Activated T-helper 1 cell treated with anti-CD3 and anti-CD28 coated beads, Interleukin-12 subunit alpha, Interleukin-12 subunit beta, Interleukin-2, Interleukin-4 antibody, amounts not matched to agents 30 ng/mL and 10 ng/mL and 1 ng/mL, durations not matched to agents 14 hours and 24 hours and 36 hours (primary cell): ENCODE measurements at regions of chr2 and their contacts with region 1.

Region 1: DNA sequence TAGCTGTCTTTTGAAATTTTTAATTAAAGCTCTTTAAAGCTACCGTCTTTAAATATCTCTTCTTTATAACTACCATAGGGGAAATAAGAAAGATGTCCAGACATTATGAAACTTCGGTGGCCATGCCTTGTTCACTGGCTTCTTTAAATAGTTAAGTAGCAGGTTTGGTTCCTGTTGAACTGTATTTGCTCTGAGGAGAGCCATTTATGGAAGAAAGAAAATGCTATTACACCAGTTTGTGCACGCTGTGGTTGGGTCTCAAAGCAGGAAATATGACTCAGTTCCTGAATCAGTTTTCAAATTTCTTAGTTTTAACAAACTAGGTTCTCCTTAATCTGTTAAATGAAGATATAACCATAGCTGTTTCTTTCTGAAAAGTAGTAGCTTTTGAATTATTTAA is 12.2 kb downstream of the ARPC2 start:
- DNase-seq: peak; percentile 57
- H3K4me3 Mint-ChIP-seq: peak overlapping the region; percentile 65
- H3K27ac Mint-ChIP-seq: peak overlapping the region; percentile 87
- H3K4me1 Mint-ChIP-seq: peaks cover 66% of the 10 kb centered on the region
- H3K27me3 Mint-ChIP-seq: no peaks in the 10 kb centered on the region

Region 2: DNA sequence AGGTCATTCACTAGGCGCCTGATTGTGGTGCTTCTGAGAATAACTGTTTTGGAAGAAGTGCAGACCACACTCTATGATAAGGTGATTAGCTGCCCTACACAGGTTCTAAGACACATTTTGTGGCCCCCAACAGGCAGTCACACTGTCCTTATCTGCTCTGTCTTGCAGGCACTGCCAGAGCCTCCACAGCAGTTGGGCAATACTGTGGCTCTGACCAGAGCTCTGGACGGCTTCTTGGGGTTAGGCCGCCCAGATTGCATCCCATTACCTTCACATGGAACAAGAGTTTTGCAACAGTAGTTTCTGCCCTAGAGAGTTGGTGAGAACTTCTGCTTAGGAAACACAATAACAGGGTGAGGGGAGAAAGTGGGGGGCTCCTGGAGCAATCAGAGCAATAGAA is 137.5 kb before region 1 on chr2:
- intact Hi-C with region 1: no loop called
- DNase-seq: no peak
- H3K4me3 Mint-ChIP-seq: no peak overlapping the region
- H3K27ac Mint-ChIP-seq: no peak overlapping the region
- H3K4me1 Mint-ChIP-seq: no peaks in the 10 kb centered on the region
- H3K27me3 Mint-ChIP-seq: peaks cover 3% of the 10 kb centered on the region

Region 3: GRCh38 chr2:218186355-218186766 is 42.9 kb before region 1 on chr2:
- intact Hi-C with region 1: loop called (anchors 1 kb)
- DNase-seq: peak; percentile 47
- H3K4me3 Mint-ChIP-seq: no peak overlapping the region
- H3K27ac Mint-ChIP-seq: no peak overlapping the region
- H3K4me1 Mint-ChIP-seq: peaks cover 10% of the 10 kb centered on the region
- H3K27me3 Mint-ChIP-seq: peaks cover 5% of the 10 kb centered on the region

Region 4: DNA sequence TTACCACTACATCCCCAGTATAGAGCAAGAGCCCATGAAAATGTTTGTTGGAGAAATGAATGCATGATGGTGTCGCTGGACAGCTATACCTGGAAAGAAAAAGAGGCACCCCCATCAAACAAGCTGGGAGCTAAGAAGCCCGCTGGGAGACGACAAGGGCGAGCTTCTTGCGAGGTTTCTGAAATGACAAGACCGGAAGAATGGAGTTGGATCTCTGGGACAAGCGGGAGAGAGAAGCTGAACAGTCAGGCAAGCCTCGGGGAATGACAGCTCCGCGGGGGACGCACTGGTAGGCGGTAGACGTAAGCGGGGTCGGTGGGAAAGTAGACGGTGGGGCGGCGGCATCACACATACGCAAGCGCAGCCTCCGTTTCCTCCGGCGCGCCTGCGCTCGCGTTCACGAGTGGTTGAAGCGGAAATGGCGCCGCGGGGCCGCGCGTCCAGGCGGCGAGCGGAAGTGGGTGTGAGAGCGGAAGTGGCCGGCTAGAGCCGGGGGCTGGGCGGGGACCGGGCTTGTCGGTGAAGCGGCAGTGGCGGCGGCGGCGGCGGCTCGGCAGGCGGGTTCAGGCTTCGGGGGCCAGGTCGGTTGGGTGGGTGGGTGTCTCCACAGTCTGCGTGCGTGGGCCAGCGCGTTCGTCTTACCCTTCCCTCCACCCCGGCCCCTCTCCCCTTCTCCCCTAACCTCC is 12.4 kb before region 1 on chr2 and contains the start of gene ARPC2:
- intact Hi-C with region 1: loop called (anchors 1 kb)
- DNase-seq: peak; percentile 96
- H3K4me3 Mint-ChIP-seq: peak within 1 kb of the TSS; percentile 91
- H3K27ac Mint-ChIP-seq: peak within 1 kb of the TSS; percentile 95
- H3K4me1 Mint-ChIP-seq: peaks cover 36% of the 10 kb centered on the region
- H3K27me3 Mint-ChIP-seq: no peaks in the 10 kb centered on the region
- total RNA-seq, gene ARPC2: 507 and 509 TPM in 2 replicates

Region 5: GRCh38 chr2:218245214-218245613 is 16.0 kb after region 1 on chr2:
- intact Hi-C with region 1: loop called (anchors 2 kb)
- DNase-seq: no peak
- H3K4me3 Mint-ChIP-seq: no peak overlapping the region
- H3K27ac Mint-ChIP-seq: peak overlapping the region; percentile 46
- H3K4me1 Mint-ChIP-seq: peaks cover 28% of the 10 kb centered on the region
- H3K27me3 Mint-ChIP-seq: no peaks in the 10 kb centered on the region

Region 6: DNA sequence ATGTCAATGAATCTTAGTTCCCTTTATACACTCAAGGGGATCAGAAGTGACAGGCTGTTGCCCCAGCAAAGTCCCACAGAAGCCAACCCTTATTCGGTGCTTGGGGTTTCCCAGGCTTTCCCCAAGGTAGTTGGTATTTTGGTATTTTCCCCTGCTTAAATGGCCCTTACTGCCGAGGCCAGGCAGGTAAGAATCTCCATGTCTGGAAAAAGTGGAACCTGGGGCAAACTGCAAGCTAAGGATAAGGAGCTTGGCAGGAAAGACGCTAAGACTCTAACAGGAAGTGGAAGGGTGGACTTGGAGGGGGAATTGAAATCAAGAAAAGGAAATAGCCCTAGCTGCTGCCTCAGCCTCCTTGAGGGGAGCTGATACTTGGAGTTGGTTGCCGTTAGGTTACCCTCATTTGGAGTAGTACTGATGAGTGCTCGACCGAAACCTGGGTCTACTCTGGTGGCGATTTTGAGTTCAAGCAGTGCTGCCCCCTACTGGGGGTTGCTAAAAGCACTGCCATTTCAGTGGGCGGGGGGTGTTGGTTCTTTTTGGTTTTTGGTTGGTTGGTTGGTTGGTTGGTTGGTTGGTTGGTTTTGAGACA is 28.2 kb after region 1 on chr2:
- intact Hi-C with region 1: loop called (anchors 1 kb)
- DNase-seq: peak; percentile 46
- H3K4me3 Mint-ChIP-seq: no peak overlapping the region
- H3K27ac Mint-ChIP-seq: peak overlapping the region; percentile 83
- H3K4me1 Mint-ChIP-seq: peaks cover 31% of the 10 kb centered on the region
- H3K27me3 Mint-ChIP-seq: no peaks in the 10 kb centered on the region

Region 7: DNA sequence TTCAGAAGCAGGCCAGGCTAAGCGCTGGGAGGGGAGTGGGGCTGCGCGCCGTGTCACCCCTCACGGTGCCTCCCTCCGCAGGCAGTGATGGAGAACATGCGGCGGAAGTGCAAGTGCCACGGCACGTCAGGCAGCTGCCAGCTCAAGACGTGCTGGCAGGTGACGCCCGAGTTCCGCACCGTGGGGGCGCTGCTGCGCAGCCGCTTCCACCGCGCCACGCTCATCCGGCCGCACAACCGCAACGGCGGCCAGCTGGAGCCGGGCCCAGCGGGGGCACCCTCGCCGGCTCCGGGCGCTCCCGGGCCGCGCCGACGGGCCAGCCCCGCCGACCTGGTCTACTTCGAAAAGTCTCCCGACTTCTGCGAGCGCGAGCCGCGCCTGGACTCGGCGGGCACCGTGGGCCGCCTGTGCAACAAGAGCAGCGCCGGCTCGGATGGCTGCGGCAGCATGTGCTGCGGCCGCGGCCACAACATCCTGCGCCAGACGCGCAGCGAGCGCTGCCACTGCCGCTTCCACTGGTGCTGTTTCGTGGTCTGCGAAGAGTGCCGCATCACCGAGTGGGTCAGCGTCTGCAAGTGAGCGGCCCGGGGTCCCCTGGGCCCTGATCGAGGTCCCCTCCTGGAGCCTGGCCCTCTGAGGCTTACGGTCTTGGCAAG is 663.6 kb after region 1 on chr2:
- intact Hi-C with region 1: loop called (anchors 10 kb)
- DNase-seq: peak; percentile 72
- H3K4me3 Mint-ChIP-seq: peak overlapping the region; percentile 15
- H3K27ac Mint-ChIP-seq: peak overlapping the region; percentile 81
- H3K4me1 Mint-ChIP-seq: peaks cover 35% of the 10 kb centered on the region
- H3K27me3 Mint-ChIP-seq: peaks cover 59% of the 10 kb centered on the region

Region 8: GRCh38 chr2:219253753-219254590 is 1024.7 kb after region 1 on chr2 and contains the start of gene TUBA4A:
- intact Hi-C with region 1: loop called (anchors 10 kb)
- DNase-seq: peak; percentile 87
- H3K4me3 Mint-ChIP-seq: peak within 1 kb of the TSS; percentile 93
- H3K27ac Mint-ChIP-seq: peak within 1 kb of the TSS; percentile 98
- H3K4me1 Mint-ChIP-seq: peaks cover 50% of the 10 kb centered on the region
- H3K27me3 Mint-ChIP-seq: no peaks in the 10 kb centered on the region
- total RNA-seq, gene TUBA4A: 211 and 217 TPM in 2 replicates